Calu3 (cell line): ENCODE measurements at regions of chr12 and their contacts with region 1.

Region 1: GRCh38 chr12:2057041-2057794 is 4.4 kb downstream of the CACNA1C start:
- DNase-seq: peak; percentile 56
- H3K4me3 Mint-ChIP-seq: no peak overlapping the region
- H3K27ac Mint-ChIP-seq: no peak overlapping the region
- H3K4me1 Mint-ChIP-seq: no peaks in the 10 kb centered on the region
- H3K27me3 Mint-ChIP-seq: peaks cover 94% of the 10 kb centered on the region
- CTCF ChIP-seq: no peak

Region 2: GRCh38 chr12:1443421-1444141 is 613.6 kb before region 1 on chr12:
- CTCF ChIA-PET with region 1: no interaction called
- intact Hi-C with region 1: no loop called
- DNase-seq: no peak
- H3K4me3 Mint-ChIP-seq: no peak overlapping the region
- H3K27ac Mint-ChIP-seq: no peak overlapping the region
- H3K4me1 Mint-ChIP-seq: no peaks in the 10 kb centered on the region
- H3K27me3 Mint-ChIP-seq: no peaks in the 10 kb centered on the region
- CTCF ChIP-seq: no peak

Region 3: GRCh38 chr12:1970331-1970900 is 86.8 kb before region 1 on chr12:
- CTCF ChIA-PET with region 1: no interaction called
- intact Hi-C with region 1: no loop called
- DNase-seq: no peak
- H3K4me3 Mint-ChIP-seq: no peak overlapping the region
- H3K27ac Mint-ChIP-seq: no peak overlapping the region
- H3K4me1 Mint-ChIP-seq: no peaks in the 10 kb centered on the region
- H3K27me3 Mint-ChIP-seq: no peaks in the 10 kb centered on the region
- CTCF ChIP-seq: no peak

Region 4: DNA sequence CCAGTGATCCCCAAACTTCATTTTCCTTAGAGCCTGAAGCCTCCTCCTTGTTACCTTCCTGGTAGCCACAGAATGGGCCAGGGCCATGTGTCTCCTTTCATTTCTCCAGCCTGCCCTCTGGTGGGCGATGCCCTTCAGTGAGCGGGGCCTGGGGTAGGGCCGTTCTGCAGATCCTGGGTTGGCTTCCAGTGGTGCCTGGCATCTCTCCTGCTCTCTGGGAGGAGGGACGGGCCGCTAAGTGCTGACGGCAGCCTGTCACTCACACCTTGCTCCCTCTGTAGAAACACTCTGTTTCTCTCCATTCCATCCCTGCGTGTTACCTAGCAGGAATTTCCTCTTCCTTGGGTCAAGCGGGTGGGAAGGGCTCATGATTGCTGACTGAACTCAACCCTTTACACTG is 227.6 kb after region 1 on chr12:
- CTCF ChIA-PET with region 1: no interaction called
- intact Hi-C with region 1: loop called (anchors 2 kb)
- DNase-seq: peak; percentile 78
- H3K4me3 Mint-ChIP-seq: no peak overlapping the region
- H3K27ac Mint-ChIP-seq: no peak overlapping the region
- H3K4me1 Mint-ChIP-seq: no peaks in the 10 kb centered on the region
- H3K27me3 Mint-ChIP-seq: peaks cover 82% of the 10 kb centered on the region
- CTCF ChIP-seq: peak; percentile 66

Region 5: GRCh38 chr12:2583091-2583497 is 525.9 kb after region 1 on chr12:
- CTCF ChIA-PET with region 1: no interaction called
- intact Hi-C with region 1: loop called (anchors 5 kb)
- DNase-seq: peak; percentile 80
- H3K4me3 Mint-ChIP-seq: no peak overlapping the region
- H3K27ac Mint-ChIP-seq: no peak overlapping the region
- H3K4me1 Mint-ChIP-seq: no peaks in the 10 kb centered on the region
- H3K27me3 Mint-ChIP-seq: peaks cover 93% of the 10 kb centered on the region
- CTCF ChIP-seq: peak; percentile 88

Region 6: DNA sequence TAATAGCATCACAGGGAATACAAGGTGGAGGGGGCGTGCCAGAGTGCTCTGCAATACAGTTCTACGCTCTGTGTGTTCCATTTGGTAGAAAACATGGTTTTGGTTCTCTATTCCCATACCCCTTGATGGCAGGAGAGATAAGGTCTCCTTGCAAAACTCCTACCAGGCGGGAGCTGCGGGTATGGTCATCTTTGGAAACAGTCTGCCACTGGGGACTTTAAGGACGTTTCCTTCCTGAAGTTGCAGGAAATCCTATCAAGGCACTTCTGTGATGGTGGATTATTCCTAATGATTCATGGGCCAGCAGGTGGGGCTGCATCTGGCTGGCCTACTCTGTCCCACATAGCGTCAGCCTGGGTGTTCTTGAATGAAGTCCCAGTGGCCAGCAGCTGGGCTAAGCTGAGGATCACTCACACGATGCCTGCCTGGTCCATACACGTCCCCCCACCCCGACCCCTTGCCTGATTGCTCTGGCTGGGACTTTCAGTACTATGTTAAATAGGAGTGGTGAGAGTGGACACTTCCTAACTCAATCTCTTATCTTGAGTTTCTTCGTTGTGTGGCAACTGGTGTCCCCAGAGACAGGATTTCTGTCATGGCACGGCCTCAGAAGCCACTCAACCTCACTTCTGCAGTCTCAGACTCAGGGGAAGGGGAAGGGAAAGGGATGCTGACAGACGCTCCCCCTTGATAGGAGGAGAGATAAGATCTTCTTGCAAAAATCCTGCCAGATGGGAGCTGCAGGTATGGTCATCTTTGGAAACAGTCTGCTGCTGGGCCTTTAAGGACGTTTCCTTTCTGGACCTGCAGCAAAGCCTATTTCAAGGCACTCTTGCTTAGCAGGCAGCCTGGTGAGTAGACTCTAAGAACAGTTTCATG is 676.5 kb after region 1 on chr12:
- CTCF ChIA-PET with region 1: no interaction called
- intact Hi-C with region 1: no loop called
- DNase-seq: no peak
- H3K4me3 Mint-ChIP-seq: no peak overlapping the region
- H3K27ac Mint-ChIP-seq: no peak overlapping the region
- H3K4me1 Mint-ChIP-seq: no peaks in the 10 kb centered on the region
- H3K27me3 Mint-ChIP-seq: peaks cover 100% of the 10 kb centered on the region
- CTCF ChIP-seq: no peak